ENCODE measurements at regions of chr2 and their contacts with region 1.

Region 1: GRCh38 chr2:110755491-110756078 is 23.2 kb downstream of the ACOXL start:
- DNase-seq: peak; percentile 21
- H3K4me3 ChIP-seq: no peak overlapping the region
- H3K27ac ChIP-seq: no peak overlapping the region
- H3K4me1 ChIP-seq: no peaks in the 10 kb centered on the region
- H3K27me3 ChIP-seq: peaks cover 4% of the 10 kb centered on the region
- CTCF ChIP-seq: peak; percentile 69

Region 2: DNA sequence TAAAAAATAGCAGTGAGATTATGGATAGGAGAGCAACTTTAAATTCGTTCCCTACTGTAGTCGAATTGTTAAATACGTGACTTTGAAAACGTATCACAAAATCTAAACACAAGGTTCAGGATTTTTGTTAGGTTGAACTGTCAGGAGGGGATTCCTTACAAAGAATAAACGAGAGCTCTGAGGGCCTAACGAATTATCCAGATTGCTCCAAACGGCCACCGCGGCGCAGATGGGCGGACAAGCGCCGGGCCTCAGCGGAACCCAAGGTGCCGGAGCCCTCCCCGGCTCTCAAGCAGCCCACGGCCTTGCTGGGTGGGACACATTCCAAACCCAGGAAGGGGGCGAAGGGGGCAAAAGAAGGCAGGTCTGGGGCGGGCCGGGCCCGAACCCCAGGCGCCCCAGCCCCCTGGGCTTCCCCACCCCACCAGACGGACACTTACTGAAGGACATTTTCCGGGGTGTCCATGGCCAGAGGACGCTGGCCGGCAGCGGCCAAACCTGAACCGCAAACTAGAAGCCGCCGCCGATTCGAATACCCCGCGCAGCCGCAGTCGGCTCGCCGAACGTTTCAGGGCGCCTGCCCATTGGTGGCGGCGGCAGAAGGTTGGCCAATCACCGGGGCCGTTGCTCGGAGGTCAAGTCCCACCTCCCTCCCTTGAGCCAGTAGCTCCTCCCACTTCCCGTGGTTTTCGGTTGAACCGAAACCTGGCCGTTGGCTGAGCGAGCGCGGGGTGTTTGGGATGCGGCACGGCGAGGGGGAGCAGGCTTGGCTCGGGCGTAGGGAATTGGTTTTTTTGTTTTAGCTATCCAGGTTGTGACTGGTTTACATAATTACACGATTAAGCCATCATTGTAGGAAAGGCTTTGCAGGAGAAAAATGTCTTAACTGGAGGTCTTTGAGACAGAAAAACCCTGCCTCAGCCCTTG is 77.8 kb before region 1 on chr2 and contains the start of gene BUB1:
- CTCF ChIA-PET with region 1: interaction called, 3 read pairs
- POLR2A ChIA-PET with region 1: no interaction called
- intact Hi-C with region 1: loop called (anchors 5 kb)
- DNase-seq: peak; percentile 97
- H3K4me3 ChIP-seq: peak within 1 kb of the TSS; percentile 97
- H3K27ac ChIP-seq: peak within 1 kb of the TSS; percentile 91
- H3K4me1 ChIP-seq: peaks cover 18% of the 10 kb centered on the region
- H3K27me3 ChIP-seq: no peaks in the 10 kb centered on the region
- CTCF ChIP-seq: no peak
- total RNA-seq, gene BUB1: 98.0 and 108 TPM in 2 replicates

Region 3: GRCh38 chr2:110788976-110789375 is 33.4 kb after region 1 on chr2:
- CTCF ChIA-PET with region 1: no interaction called
- POLR2A ChIA-PET with region 1: no interaction called
- intact Hi-C with region 1: no loop called
- DNase-seq: no peak
- H3K4me3 ChIP-seq: no peak overlapping the region
- H3K27ac ChIP-seq: no peak overlapping the region
- H3K4me1 ChIP-seq: no peaks in the 10 kb centered on the region
- H3K27me3 ChIP-seq: peaks cover 61% of the 10 kb centered on the region
- CTCF ChIP-seq: no peak

Measured in A673 (cell line).